ENCODE measurements at regions of chr10 and their contacts with region 1.

Region 1: DNA sequence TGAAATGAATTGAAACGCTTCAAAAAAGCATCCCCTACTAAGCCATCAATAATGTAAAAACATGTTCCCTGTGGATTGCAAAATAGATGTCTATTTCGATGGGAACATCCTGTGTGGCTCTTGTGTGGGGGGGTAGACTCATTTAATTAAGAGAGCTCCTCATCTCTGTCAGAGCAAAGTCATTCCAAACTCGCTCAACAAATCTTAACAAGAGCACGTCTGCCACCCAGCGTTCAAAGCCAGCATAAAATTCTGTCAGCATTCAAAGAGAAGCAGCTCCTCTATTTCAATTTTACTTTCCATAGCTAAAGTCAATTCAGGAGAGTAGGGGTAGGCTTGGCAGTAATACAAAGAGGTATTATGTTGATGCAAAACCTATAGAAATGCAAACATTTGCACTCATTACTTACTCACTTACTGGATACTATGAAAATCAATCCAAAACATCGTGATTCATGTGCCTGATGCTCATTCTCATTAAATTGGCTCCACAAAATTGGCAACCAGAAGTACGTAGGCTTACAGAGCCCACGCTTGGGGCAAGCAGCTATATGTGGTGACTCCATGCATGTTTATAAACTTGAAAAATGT is 114.9 kb downstream of the IPMK start:
- DNase-seq: peak; percentile 80
- H3K4me3 Mint-ChIP-seq: no peak overlapping the region
- H3K27ac Mint-ChIP-seq: no peak overlapping the region
- H3K4me1 Mint-ChIP-seq: peaks cover 16% of the 10 kb centered on the region
- H3K27me3 Mint-ChIP-seq: no peaks in the 10 kb centered on the region
- CTCF ChIP-seq: peak; percentile 52

Region 2: DNA sequence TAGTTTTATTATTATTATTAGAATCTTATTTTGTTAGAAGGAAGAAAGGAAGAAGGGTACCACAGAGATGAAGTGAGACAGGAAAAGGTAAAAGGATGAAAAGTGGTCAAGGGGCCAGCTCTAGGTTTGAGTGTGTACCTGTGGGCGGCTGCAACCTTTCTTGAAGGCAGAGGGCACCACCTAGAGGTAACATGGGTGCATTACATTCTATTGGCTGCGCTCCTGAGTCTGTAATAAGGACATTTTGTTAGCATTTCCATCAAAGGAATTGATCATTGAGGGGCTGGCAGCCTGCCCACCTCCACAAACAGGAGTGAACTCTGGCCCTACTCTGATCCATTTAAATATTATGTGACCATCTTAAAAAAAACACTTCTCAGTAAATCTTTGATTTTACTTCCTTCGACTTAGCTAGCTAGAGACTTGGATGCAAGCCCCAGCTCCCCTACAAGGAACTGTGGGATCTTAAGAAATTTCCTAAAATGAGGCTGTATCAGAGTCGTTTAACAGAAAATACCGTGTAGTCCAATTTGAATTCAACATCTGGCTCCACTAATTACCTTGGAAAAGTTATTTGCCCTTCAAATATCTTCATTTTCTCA is 495.5 kb before region 1 on chr10:
- CTCF ChIA-PET with region 1: interaction called, 17 read pairs
- POLR2A ChIA-PET with region 1: interaction called, 3 read pairs
- intact Hi-C with region 1: no loop called
- DNase-seq: peak; percentile 73
- H3K4me3 Mint-ChIP-seq: no peak overlapping the region
- H3K27ac Mint-ChIP-seq: no peak overlapping the region
- H3K4me1 Mint-ChIP-seq: no peaks in the 10 kb centered on the region
- H3K27me3 Mint-ChIP-seq: no peaks in the 10 kb centered on the region
- CTCF ChIP-seq: peak; percentile 88

Region 3: DNA sequence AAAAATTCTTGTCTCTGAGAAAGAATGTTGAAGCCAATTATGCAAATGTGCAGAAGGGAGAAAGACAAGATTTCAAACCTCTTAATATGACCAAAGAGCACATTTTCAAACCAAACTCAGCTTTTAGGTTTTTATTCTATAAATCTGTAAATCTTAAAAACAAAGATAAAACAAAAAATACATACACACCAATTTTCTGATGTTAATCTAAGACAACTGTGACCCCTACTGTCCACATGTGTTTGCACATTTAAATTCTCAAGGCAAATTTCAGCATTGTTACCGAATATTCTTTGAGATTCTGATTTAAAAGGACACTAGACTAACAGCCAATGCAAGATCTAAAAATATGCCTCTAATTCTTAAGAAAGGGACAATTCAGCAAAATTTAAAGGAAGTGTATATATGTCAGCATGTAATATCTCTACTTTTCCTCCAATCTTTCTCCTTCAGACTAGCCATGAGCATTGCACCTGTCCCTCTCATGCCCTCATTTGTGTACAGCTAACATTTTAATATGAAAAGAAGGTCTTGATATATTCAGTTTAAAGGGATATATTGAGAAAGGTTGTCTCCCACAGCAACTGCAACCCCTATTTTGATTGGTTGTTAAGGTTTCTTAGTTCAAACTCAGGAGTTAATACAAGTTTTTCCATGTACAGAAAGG is 302.9 kb before region 1 on chr10:
- CTCF ChIA-PET with region 1: interaction called, 15 read pairs
- POLR2A ChIA-PET with region 1: interaction called, 3 read pairs
- intact Hi-C with region 1: loop called (anchors 5 kb)
- DNase-seq: peak; percentile 38
- H3K4me3 Mint-ChIP-seq: no peak overlapping the region
- H3K27ac Mint-ChIP-seq: no peak overlapping the region
- H3K4me1 Mint-ChIP-seq: peaks cover 5% of the 10 kb centered on the region
- H3K27me3 Mint-ChIP-seq: no peaks in the 10 kb centered on the region
- CTCF ChIP-seq: peak; percentile 58

Region 4: GRCh38 chr10:58054881-58055280 is 97.9 kb before region 1 on chr10:
- CTCF ChIA-PET with region 1: interaction called, 3 read pairs
- POLR2A ChIA-PET with region 1: no interaction called
- intact Hi-C with region 1: loop called (anchors 1 kb)
- DNase-seq: no peak
- H3K4me3 Mint-ChIP-seq: no peak overlapping the region
- H3K27ac Mint-ChIP-seq: no peak overlapping the region
- H3K4me1 Mint-ChIP-seq: no peaks in the 10 kb centered on the region
- H3K27me3 Mint-ChIP-seq: no peaks in the 10 kb centered on the region
- CTCF ChIP-seq: no peak

Region 5: GRCh38 chr10:58081353-58081752 is 71.4 kb before region 1 on chr10:
- CTCF ChIA-PET with region 1: interaction called, 14 read pairs
- POLR2A ChIA-PET with region 1: no interaction called
- intact Hi-C with region 1: no loop called
- DNase-seq: no peak
- H3K4me3 Mint-ChIP-seq: no peak overlapping the region
- H3K27ac Mint-ChIP-seq: no peak overlapping the region
- H3K4me1 Mint-ChIP-seq: no peaks in the 10 kb centered on the region
- H3K27me3 Mint-ChIP-seq: no peaks in the 10 kb centered on the region
- CTCF ChIP-seq: no peak

Measured in MCF 10A (cell line).